ENCODE measurements at regions of chr1 and their contacts with region 1.

Region 1: GRCh38 chr1:226051356-226051755 is 11.2 kb upstream of the H3-3A start:
- DNase-seq: no peak
- ATAC-seq: no peak
- H3K4me3 ChIP-seq: no peak overlapping the region
- H3K27ac ChIP-seq: no peak overlapping the region
- H3K4me1 ChIP-seq: no peaks in the 10 kb centered on the region
- H3K27me3 ChIP-seq: no peaks in the 10 kb centered on the region
- CTCF ChIP-seq: no peak
- POLR2A ChIP-seq: no peak

Region 2: DNA sequence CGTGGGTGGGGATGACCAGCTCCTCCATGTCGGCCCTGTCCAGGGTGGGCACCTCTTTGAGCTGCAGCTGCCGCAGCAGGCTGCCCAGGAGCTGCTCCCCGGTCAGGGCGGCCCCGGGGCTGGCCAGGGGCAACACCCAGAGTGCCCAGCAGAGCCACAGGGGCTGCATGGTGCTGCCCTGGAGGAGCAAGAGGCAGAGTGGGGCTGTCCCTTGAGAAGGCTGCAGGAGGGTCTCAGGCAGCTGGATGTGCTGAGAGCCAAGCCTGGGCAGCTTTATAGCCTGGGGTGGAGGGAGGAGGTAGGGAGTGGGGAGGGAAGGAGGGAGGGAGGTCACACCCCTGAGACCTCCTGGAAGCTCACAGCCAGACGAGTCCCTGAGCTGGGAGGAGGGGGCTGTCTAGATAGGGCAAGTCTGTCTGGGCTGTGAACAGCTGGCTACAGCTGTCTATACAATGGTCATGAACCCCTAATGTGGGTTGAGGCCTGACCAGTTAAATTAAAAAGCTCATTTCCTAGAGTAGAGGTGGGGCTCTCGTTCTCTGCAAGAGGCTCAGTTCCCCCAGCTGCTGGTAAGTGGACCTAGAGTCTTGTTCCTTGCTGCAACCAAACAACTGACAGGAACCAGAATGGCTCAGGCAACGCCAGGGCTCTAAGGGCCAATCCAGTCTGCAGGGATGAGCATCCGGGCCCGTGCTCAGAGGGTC is 162.3 kb before region 1 on chr1 and contains the start of gene LEFTY1:
- in situ Hi-C with region 1: no loop called
- intact Hi-C with region 1: no loop called
- DNase-seq: no peak
- ATAC-seq: no peak
- H3K4me3 ChIP-seq: no peak within 1 kb of the TSS
- H3K27ac ChIP-seq: no peak within 1 kb of the TSS
- H3K4me1 ChIP-seq: no peaks in the 10 kb centered on the region
- H3K27me3 ChIP-seq: no peaks in the 10 kb centered on the region
- CTCF ChIP-seq: no peak
- POLR2A ChIP-seq: no peak
- total RNA-seq, gene LEFTY1: 0.97 TPM in 1 of 4 donors, not detected in the others

Region 3: DNA sequence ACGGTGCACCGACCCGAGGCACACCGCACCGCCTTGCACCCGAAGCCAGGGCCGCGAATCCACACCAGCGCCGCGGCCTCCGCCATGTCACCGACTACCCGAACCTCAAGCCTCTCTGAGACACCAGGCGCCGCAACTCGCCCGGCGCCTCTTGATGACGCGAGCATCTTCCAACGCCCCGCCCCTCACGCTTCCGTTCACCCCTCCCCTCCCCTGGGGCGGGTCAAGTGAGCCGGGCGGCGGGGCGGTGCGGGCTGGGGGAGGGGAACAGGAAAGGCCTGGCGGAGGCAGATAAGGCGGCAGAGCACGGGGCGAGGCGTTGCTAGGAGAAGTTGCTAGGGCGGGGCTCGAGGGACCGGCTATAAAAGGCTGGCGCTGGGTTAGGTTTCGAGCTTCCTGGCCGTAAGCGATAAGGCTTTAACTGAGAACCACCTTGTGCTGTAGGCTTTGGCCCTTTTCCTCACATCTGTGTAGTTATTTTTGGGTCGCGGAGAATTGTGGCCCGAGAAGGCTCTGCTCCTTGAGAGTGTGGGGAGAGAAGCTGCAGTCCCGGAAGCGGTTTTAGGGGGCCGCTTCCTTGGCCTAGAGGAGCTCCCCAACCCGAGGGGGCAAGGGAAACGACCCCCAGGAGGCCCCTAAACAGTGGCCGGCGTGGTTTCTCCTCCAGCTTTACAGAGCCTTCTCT is 52.0 kb before region 1 on chr1 and contains the start of gene SDE2:
- in situ Hi-C with region 1: loop called in 1 of 4 experiments (anchors 10 kb)
- intact Hi-C with region 1: no loop called
- DNase-seq: peak; percentile 100
- ATAC-seq: peak; percentile 85 to 87
- H3K4me3 ChIP-seq: peak within 1 kb of the TSS; percentile 73 to 90 (median 79)
- H3K27ac ChIP-seq: peak within 1 kb of the TSS; percentile 92 to 98 (median 93)
- H3K4me1 ChIP-seq: peaks cover 31 to 41% of the 10 kb centered on the region in 2 donors
- H3K27me3 ChIP-seq: no peaks in the 10 kb centered on the region
- CTCF ChIP-seq: no peak
- POLR2A ChIP-seq: peak; percentile 93 to 95
- total RNA-seq, gene SDE2: 20.1 to 30.0 (median 23.0) TPM

Region 4: GRCh38 chr1:226009650-226010044 is 41.7 kb before region 1 on chr1:
- in situ Hi-C with region 1: loop called in 2 of 4 experiments (anchors 5 to 10 kb)
- intact Hi-C with region 1: no loop called
- DNase-seq: no peak
- ATAC-seq: no peak
- H3K4me3 ChIP-seq: no peak overlapping the region
- H3K27ac ChIP-seq: no peak overlapping the region
- H3K4me1 ChIP-seq: no peaks in the 10 kb centered on the region
- H3K27me3 ChIP-seq: no peaks in the 10 kb centered on the region
- CTCF ChIP-seq: no peak
- POLR2A ChIP-seq: no peak